ENCODE measurements at regions of chr7 and their contacts with region 1.

Region 1: DNA sequence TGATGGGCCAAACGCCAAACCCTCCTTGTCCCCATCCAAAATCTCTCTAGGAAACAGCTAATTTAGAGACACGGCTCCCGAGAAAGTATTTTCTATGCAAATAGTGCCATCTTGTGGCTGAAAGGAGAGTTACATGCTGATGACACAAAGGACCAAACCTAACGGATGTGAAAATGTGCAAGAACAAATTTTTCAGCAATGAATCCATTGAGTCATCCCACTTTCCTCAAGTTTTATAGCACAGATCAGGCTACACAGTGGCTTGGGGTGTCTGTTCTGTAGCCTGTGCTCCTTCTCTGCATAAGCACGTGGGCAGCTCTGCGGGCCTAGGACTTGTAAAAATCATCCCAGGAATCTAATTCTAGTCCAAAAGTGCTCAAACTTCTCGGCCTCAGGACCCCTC is 154.8 kb upstream of the PRR15 start:
- DNase-seq: peak in 4 of 5 donors; percentile 56 to 88 (median 78)
- H3K4me3 ChIP-seq: no peak overlapping the region
- H3K27ac ChIP-seq: no peak overlapping the region
- H3K4me1 ChIP-seq: peaks cover 0 to under 1% (median 0%) of the 10 kb centered on the region in 3 donors
- H3K27me3 ChIP-seq: no peaks in the 10 kb centered on the region
- CTCF ChIP-seq: peak; percentile 84

Region 2: GRCh38 chr7:28926871-28927597 is 481.8 kb before region 1 on chr7:
- intact Hi-C with region 1: loop called (anchors 5 kb)
- DNase-seq: peak; percentile 82 to 96 (median 93)
- H3K4me3 ChIP-seq: peak overlapping the region; percentile 64 to 72 (median 65)
- H3K27ac ChIP-seq: peak overlapping the region in 1 of 2 donors; percentile 13
- H3K4me1 ChIP-seq: peaks cover 0 to 9% (median 0%) of the 10 kb centered on the region in 3 donors
- H3K27me3 ChIP-seq: no peaks in the 10 kb centered on the region
- CTCF ChIP-seq: peak; percentile 83

Region 3: GRCh38 chr7:29189743-29190201 is 219.1 kb before region 1 on chr7:
- intact Hi-C with region 1: loop called (anchors 5 kb)
- DNase-seq: peak; percentile 80 to 88 (median 85)
- H3K4me3 ChIP-seq: peak overlapping the region in 1 of 3 donors; percentile 31
- H3K27ac ChIP-seq: no peak overlapping the region
- H3K4me1 ChIP-seq: no peaks in the 10 kb centered on the region
- H3K27me3 ChIP-seq: no peaks in the 10 kb centered on the region
- CTCF ChIP-seq: peak; percentile 78

Region 4: DNA sequence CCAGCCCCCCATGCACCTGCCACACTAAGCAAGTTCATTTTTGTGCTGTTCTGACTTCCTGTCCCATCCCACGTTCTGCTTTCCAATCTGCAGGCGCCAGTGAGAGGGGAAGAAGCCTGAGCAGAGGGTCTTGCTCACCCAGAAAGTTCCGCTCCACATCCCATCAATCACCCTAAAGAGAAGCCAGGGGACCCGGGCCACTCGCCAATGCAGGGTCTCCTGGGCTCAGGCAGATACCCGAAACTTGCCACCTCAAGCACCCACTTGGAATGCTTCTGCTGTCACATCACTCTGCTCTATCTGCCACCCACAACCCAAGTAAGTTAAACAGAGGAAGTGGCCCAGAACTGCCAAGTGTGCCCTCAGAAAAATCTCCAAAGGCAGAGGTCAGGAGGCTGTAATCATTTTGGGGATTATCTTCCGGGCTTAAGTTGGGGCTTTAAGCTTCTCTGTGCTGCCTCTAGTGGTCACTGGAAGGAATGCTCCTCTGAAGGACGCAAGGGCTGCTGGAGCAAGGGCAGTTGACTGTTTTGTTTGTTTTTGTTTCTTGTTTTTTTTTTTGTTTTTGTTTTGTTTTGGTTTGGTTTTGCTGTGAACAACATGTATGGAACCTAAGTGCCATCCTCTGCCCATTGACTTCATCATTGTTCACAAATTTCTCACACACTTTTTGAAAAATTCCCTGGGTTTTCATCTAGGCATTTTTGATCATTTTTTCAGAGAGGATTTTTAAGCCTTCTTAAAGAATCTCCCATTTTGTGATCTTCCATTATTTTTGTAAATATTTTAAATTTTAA is 180.3 kb after region 1 on chr7:
- intact Hi-C with region 1: no loop called
- DNase-seq: peak in 3 of 5 donors; percentile 17 to 50 (median 44)
- H3K4me3 ChIP-seq: no peak overlapping the region
- H3K27ac ChIP-seq: no peak overlapping the region
- H3K4me1 ChIP-seq: no peaks in the 10 kb centered on the region
- H3K27me3 ChIP-seq: no peaks in the 10 kb centered on the region
- CTCF ChIP-seq: peak; percentile 72

Measured in kidney (tissue), 22 donors.